ENCODE measurements at regions of chr17 and their contacts with region 1.

Region 1: GRCh38 chr17:40098846-40099618 is 1.4 kb downstream of the NR1D1 start:
- DNase-seq: peak; percentile 100
- H3K4me3 ChIP-seq: peak overlapping the region; percentile 59
- H3K4me3 Mint-ChIP-seq: peak overlapping the region; percentile 94
- H3K27ac Mint-ChIP-seq: peak overlapping the region; percentile 92
- H3K4me1 ChIP-seq: peaks cover 37% of the 10 kb centered on the region
- H3K4me1 Mint-ChIP-seq: peaks cover 26% of the 10 kb centered on the region
- H3K27me3 ChIP-seq: no peaks in the 10 kb centered on the region
- H3K27me3 Mint-ChIP-seq: no peaks in the 10 kb centered on the region
- CTCF ChIP-seq: no peak

Region 2: DNA sequence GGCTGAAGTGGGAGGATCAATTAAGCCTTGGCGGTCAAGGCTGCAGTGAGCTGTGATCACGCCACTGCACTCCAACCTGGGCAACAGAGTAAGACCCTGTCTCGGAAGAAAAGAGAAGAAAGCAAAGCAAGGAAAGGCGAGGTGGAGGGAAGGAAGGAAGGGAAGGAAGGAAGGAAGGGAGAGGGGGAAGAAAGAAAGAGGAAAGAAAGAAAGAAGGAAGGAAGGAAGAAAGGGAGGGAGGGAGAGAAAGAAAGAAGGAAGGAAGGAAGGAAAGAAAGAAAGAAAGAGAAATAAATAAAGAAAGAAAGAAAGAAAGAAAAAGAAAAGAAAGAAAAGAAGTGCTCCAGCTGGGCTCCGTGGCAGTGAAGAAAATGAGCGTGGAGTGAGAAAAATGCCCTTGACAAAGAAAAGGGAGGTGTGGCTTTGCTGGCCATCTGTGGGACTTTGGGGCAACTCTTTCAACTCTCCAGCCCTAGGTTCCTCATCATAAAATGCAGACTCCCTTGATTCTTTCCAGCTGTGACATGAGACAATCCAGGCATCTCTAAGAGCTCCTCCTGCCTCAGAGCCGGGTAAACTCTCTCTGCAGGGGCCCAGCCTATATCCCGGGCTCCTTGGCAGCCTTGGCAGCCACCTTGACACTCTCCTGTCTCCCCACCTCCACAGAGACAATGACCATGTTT is 133.9 kb before region 1 on chr17:
- CTCF ChIA-PET with region 1: no interaction called
- POLR2A ChIA-PET with region 1: no interaction called
- intact Hi-C with region 1: no loop called
- DNase-seq: no peak
- H3K4me3 ChIP-seq: no peak overlapping the region
- H3K4me3 Mint-ChIP-seq: no peak overlapping the region
- H3K27ac Mint-ChIP-seq: no peak overlapping the region
- H3K4me1 ChIP-seq: peaks cover 19% of the 10 kb centered on the region
- H3K4me1 Mint-ChIP-seq: peaks cover 21% of the 10 kb centered on the region
- H3K27me3 ChIP-seq: no peaks in the 10 kb centered on the region
- H3K27me3 Mint-ChIP-seq: peaks cover 3% of the 10 kb centered on the region
- CTCF ChIP-seq: no peak

Region 3: DNA sequence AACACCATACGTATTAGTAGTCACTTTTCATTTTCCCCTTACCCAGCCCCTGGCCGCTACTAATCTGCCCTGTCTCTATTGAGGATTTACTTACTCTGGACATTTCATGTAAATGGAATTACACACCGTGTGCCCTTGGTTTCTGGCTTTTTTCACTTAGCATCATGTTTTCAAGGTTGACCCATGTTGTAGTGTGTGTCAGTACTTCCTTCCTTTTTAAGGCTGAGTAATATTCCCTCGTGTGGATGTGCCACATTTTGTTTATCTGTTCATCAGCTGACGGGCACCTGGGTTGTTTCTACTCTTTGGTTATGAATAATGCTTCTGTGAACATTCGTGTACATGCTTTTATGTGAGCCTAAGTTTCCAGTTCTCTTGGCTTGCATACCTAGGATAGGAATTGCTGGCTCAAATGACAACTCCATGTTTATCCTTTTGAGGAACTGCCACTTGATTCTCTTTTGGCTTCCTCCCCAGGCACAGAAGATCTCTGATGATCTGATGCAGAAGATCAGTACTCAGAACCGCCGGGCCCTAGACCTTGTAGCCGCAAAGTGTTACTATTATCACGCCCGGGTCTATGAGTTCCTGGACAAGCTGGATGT is 110.7 kb before region 1 on chr17:
- CTCF ChIA-PET with region 1: no interaction called
- POLR2A ChIA-PET with region 1: no interaction called
- intact Hi-C with region 1: no loop called
- DNase-seq: no peak
- H3K4me3 ChIP-seq: no peak overlapping the region
- H3K4me3 Mint-ChIP-seq: no peak overlapping the region
- H3K27ac Mint-ChIP-seq: no peak overlapping the region
- H3K4me1 ChIP-seq: no peaks in the 10 kb centered on the region
- H3K4me1 Mint-ChIP-seq: no peaks in the 10 kb centered on the region
- H3K27me3 ChIP-seq: no peaks in the 10 kb centered on the region
- H3K27me3 Mint-ChIP-seq: no peaks in the 10 kb centered on the region
- CTCF ChIP-seq: no peak

Region 4: GRCh38 chr17:40018211-40019121 is 80.6 kb before region 1 on chr17:
- CTCF ChIA-PET with region 1: interaction called, 12 read pairs
- POLR2A ChIA-PET with region 1: no interaction called
- intact Hi-C with region 1: no loop called
- DNase-seq: no peak
- H3K4me3 ChIP-seq: no peak overlapping the region
- H3K4me3 Mint-ChIP-seq: no peak overlapping the region
- H3K27ac Mint-ChIP-seq: no peak overlapping the region
- H3K4me1 ChIP-seq: peaks cover 18% of the 10 kb centered on the region
- H3K4me1 Mint-ChIP-seq: no peaks in the 10 kb centered on the region
- H3K27me3 ChIP-seq: no peaks in the 10 kb centered on the region
- H3K27me3 Mint-ChIP-seq: no peaks in the 10 kb centered on the region
- CTCF ChIP-seq: no peak

Region 5: DNA sequence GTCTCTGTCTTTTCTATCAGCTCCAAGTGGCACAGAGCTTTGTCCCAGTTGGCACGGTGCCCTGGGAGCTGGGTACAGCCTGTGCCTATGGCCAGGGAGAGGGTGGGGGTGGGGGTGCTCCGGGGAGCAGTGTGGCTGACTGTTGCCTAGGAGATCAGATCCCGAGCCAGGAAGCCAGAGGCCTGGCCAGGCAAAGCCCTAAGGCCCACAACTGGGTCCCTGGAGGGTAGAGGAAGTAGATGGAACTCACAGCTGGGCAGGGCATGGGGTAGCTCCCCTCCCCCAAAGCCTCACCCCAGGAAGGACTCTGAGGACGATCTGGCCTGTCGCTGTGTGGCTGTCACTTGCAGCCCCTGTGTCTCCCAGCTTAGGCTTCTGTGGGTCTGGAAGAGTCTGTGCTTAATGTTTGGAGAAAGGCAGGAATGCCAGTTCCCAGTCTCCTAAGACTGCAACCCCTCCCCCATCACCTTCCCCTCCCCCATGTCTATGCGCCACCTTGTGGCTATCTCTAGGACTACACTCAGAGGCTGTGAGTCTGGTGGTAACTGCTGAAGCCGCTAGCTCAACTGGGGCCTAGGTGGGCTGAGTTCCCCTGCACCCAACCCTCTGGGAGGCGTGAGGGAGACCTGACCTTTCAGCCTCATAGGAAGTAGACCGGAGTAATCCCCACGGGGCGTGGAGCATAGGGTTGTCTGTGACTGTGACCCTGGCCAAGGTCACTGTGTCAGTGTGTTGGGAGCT is 23.7 kb before region 1 on chr17:
- CTCF ChIA-PET with region 1: interaction called, 22 read pairs
- POLR2A ChIA-PET with region 1: interaction called, 9 read pairs
- intact Hi-C with region 1: no loop called
- DNase-seq: peak; percentile 78 to 81
- H3K4me3 ChIP-seq: no peak overlapping the region
- H3K4me3 Mint-ChIP-seq: no peak overlapping the region
- H3K27ac Mint-ChIP-seq: peak overlapping the region; percentile 47
- H3K4me1 ChIP-seq: peaks cover 49% of the 10 kb centered on the region
- H3K4me1 Mint-ChIP-seq: peaks cover 27% of the 10 kb centered on the region
- H3K27me3 ChIP-seq: no peaks in the 10 kb centered on the region
- H3K27me3 Mint-ChIP-seq: no peaks in the 10 kb centered on the region
- CTCF ChIP-seq: peak; percentile 92 to 94

Region 6: DNA sequence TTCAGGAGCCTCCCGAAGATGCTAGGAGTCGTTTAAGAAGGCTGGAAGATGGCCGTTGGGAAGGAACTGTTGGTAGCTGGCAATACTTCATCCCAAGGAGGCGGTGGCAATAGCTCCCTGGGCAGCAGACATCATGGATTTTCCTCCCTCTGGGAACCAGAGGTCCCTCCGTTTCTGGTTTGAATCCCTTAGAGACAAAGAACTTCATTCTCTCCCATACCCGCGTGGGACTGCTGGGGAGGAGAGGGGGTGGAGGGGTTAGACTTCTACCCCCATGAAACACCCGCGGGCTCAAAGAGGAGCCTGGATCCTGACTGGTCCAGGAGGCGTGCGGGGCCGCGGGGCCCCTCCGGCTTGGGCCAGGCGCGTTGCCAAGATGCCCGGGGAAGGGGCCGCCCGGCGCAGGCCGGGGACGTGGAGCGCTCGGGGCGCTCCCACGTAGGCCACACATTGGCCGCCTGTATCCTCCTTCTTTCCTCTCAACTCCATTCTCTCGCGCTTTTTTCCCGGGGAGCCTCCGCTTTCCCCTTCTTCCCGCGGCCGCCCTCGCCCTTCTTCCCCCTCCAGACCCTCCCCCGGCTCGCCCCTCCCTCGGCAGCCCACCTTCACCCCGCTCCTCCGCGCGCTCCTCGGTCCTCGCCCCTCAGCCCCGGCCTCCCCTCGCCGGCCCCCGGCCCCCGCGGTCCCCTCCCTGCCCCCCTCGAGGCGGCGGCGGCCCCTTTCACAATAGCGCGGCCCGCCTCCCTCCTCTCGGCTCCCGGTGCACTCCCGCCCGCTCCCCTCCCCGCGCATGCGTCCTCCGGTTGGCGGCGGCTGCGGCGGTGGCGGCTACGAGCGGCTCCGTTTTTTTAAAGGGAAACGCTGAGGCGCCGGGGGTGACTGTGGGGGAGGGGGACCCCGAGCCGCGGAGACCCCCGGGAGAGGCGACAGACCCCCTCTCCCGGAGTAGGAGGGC is 22.4 kb after region 1 on chr17 and contains the start of gene MSL1:
- CTCF ChIA-PET with region 1: interaction called, 10 read pairs
- POLR2A ChIA-PET with region 1: interaction called, 8 read pairs
- intact Hi-C with region 1: no loop called
- DNase-seq: peak; percentile 85 to 92
- H3K4me3 ChIP-seq: peak within 1 kb of the TSS; percentile 78
- H3K4me3 Mint-ChIP-seq: peak within 1 kb of the TSS; percentile 97
- H3K27ac Mint-ChIP-seq: peak within 1 kb of the TSS; percentile 62
- H3K4me1 ChIP-seq: peaks cover 26% of the 10 kb centered on the region
- H3K4me1 Mint-ChIP-seq: peaks cover 32% of the 10 kb centered on the region
- H3K27me3 ChIP-seq: no peaks in the 10 kb centered on the region
- H3K27me3 Mint-ChIP-seq: no peaks in the 10 kb centered on the region
- CTCF ChIP-seq: no peak
- total RNA-seq, gene MSL1: 82.6 and 86.9 TPM in 2 replicates

Region 7: DNA sequence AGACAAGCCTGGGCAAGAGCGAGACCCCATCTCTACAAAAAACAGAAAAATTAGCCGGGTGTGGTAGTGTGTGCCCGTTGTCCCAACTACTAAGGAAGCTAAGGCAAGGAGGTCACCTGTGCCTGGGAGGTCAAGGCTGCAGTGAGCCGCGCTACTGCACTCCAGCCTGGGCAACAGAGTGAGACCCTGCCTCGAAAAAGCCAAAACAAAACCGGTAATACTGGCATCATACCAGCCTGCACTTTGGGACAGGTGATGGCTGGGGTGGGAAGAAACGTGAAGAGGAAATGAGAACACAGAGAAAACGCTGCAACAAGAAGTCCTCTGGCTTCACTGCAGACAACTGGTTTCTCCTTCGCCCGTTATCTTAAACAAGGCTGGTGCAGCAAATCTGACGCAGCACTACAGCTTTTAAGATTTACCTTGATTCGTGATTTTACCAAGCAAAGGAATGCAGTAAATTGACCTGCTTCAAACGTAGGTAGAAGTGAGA is 40.6 kb after region 1 on chr17:
- CTCF ChIA-PET with region 1: interaction called, 5 read pairs
- POLR2A ChIA-PET with region 1: interaction called, 20 read pairs
- intact Hi-C with region 1: no loop called
- DNase-seq: no peak
- H3K4me3 ChIP-seq: peak overlapping the region; percentile 53
- H3K4me3 Mint-ChIP-seq: peak overlapping the region; percentile 95
- H3K27ac Mint-ChIP-seq: peak overlapping the region; percentile 97
- H3K4me1 ChIP-seq: peaks cover 8% of the 10 kb centered on the region; the same call in 1 of the 2 replicates
- H3K4me1 Mint-ChIP-seq: peaks cover 9% of the 10 kb centered on the region
- H3K27me3 ChIP-seq: no peaks in the 10 kb centered on the region
- H3K27me3 Mint-ChIP-seq: no peaks in the 10 kb centered on the region
- CTCF ChIP-seq: no peak

Region 8: GRCh38 chr17:40168262-40168832 is 69.3 kb after region 1 on chr17:
- CTCF ChIA-PET with region 1: interaction called, 11 read pairs
- POLR2A ChIA-PET with region 1: interaction called, 4 read pairs
- intact Hi-C with region 1: no loop called
- DNase-seq: peak; percentile 68 to 71
- H3K4me3 ChIP-seq: no peak overlapping the region
- H3K4me3 Mint-ChIP-seq: peak overlapping the region; percentile 22
- H3K27ac Mint-ChIP-seq: peak overlapping the region; percentile 87
- H3K4me1 ChIP-seq: peaks cover 7% of the 10 kb centered on the region
- H3K4me1 Mint-ChIP-seq: peaks cover 23% of the 10 kb centered on the region
- H3K27me3 ChIP-seq: no peaks in the 10 kb centered on the region
- H3K27me3 Mint-ChIP-seq: no peaks in the 10 kb centered on the region
- CTCF ChIP-seq: peak; percentile 69 to 89